HCT116 (cell line): ENCODE measurements at regions of chrX and their contacts with region 1.

Region 1: GRCh38 chrX:41759817-41760216 is 35.8 kb downstream of the GPR82 start:
- DNase-seq: peak; percentile 15
- ATAC-seq: no peak
- H3K4me3 ChIP-seq: no peak overlapping the region
- H3K27ac ChIP-seq: no peak overlapping the region
- H3K4me1 ChIP-seq: no peaks in the 10 kb centered on the region
- H3K27me3 ChIP-seq: no peaks in the 10 kb centered on the region
- CTCF ChIP-seq: peak; percentile 13 to 46 (median 36); a peak in 4 of 6 replicates
- POLR2A ChIP-seq: no peak
- RAD21 ChIP-seq: peak; percentile 41; the same call in 1 of the 2 replicates

Region 2: GRCh38 chrX:41275661-41276609 is 483.9 kb before region 1 on chrX:
- CTCF ChIA-PET with region 1: no interaction called
- POLR2A ChIA-PET with region 1: no interaction called
- RAD21 ChIA-PET with region 1: no interaction called
- intact Hi-C with region 1: loop called (anchors 10 kb)
- DNase-seq: no peak
- ATAC-seq: peak; percentile 90
- H3K4me3 ChIP-seq: peak overlapping the region; percentile 48 to 62
- H3K27ac ChIP-seq: peak overlapping the region; percentile 56; the same call in 1 of the 2 replicates
- H3K4me1 ChIP-seq: peaks cover 0 to 7% of the 10 kb centered on the region in 2 experiments; a peak in 2 of 4 replicates
- H3K27me3 ChIP-seq: no peaks in the 10 kb centered on the region
- CTCF ChIP-seq: peak; percentile 16 to 38 (median 37); a peak in 3 of 6 replicates
- POLR2A ChIP-seq: no peak
- RAD21 ChIP-seq: peak; percentile 76

Region 3: DNA sequence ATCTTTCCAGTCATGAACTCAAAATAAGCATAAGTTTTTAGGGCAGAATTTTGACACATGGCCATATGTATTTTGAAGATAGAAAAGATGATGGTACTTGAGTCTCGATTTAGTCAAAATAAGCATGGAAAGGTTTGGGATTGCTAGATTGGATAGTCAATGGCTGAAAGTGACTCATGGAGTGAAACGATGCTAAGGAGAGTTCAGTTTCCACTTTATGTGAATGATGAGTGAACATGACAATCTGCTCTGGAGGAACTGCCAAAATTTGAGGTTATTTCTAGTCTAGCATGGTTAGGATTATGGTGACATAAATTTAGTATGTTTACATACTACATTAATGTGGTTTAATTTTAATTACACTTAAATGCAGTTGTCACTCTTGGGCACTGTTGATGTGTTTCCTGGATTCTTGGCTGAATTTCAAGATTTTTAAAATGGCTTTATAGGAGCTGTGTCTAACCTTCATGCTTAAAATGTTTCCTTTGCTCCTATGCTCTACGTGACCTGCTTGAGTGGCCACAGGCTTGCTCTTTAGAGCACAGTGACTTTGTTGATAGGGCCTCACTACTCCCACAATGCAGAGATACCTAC is 408.7 kb before region 1 on chrX:
- CTCF ChIA-PET with region 1: no interaction called
- POLR2A ChIA-PET with region 1: no interaction called
- RAD21 ChIA-PET with region 1: no interaction called
- intact Hi-C with region 1: no loop called
- DNase-seq: no peak
- ATAC-seq: peak; percentile 50
- H3K4me3 ChIP-seq: no peak overlapping the region
- H3K27ac ChIP-seq: no peak overlapping the region
- H3K4me1 ChIP-seq: no peaks in the 10 kb centered on the region
- H3K27me3 ChIP-seq: no peaks in the 10 kb centered on the region
- CTCF ChIP-seq: no peak
- POLR2A ChIP-seq: no peak
- RAD21 ChIP-seq: no peak

Region 4: DNA sequence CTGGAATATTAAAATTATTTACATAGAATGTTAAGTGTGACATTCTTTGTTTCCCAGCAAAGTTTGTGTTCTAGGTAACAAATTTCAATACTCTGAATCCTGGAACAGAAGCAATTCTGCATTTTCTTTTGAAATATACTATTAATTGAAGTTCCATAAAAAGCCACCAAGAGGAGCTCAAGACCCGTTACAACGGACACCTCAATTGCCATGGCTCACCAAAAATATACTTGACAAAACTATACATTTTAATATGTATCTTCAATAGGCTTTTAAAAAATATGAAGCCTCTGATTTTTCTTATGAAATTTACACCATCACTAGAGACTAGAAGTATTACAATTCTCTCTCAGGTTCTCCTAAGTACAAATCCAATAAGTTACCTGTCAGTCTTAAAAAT is 201.3 kb before region 1 on chrX:
- CTCF ChIA-PET with region 1: interaction called, 10 read pairs
- POLR2A ChIA-PET with region 1: no interaction called
- RAD21 ChIA-PET with region 1: no interaction called
- intact Hi-C with region 1: loop called (anchors 2 kb)
- DNase-seq: no peak
- ATAC-seq: no peak
- H3K4me3 ChIP-seq: no peak overlapping the region
- H3K27ac ChIP-seq: no peak overlapping the region
- H3K4me1 ChIP-seq: no peaks in the 10 kb centered on the region
- H3K27me3 ChIP-seq: no peaks in the 10 kb centered on the region
- CTCF ChIP-seq: peak; percentile 8 to 42 (median 11); a peak in 3 of 6 replicates
- POLR2A ChIP-seq: no peak
- RAD21 ChIP-seq: peak; percentile 37; the same call in 1 of the 2 replicates